ENCODE measurements at regions of chr10 and their contacts with region 1.

Region 1: DNA sequence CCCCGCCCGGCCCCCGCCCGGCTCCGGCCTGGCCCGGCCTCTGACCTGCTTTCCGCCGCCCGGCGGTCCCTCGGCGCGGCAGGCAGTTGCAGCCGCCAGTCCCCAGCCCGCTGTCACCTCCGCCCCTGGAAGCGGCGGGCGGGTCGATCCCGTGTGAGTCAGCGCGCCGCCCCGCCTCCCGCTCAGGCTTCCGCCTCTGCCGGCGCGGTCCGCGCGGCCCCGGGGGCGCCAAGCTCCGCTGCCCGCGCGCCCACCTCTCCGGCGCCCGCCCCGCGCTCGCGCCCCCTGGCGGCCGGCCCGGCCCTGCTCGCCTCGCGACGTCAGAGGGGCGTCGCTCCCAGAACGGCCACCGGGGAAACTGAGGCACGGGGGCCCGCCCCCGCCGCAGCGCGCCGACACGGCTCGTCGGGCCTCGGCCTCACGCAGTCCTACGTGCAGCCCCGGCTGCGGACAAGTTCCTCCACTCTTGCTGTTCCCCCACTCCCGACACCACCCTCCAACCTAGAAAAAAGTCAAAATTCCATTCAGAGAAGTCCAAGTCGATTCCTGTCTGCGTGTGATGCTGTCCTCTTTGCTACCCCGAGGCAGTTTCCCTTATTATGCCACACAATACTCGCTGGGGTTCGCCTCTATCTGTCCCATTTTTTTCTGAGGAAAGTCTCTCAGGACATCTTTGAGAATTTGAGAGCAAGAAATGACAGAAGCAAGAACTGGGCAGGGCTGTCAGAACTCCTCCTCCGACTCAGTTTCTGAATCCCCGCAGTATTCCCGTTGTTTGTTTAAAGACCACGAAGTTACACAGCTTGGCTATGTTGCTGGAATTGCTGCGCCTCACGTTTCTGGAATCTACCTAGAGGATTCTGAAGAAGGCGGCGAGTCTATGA is at the start of gene DNMBP:
- DNase-seq: peak; percentile 65 to 93 (median 83)
- ATAC-seq: peak; percentile 95
- H3K4me3 ChIP-seq: peak within 1 kb of the TSS; percentile 68 to 76
- H3K4me3 Mint-ChIP-seq: peak within 1 kb of the TSS; percentile 91
- H3K27ac ChIP-seq: peak within 1 kb of the TSS; percentile 36 to 40
- H3K27ac Mint-ChIP-seq: peak within 1 kb of the TSS; percentile 86
- H3K4me1 ChIP-seq: peaks cover 17% of the 10 kb centered on the region
- H3K4me1 Mint-ChIP-seq: peaks cover 44% of the 10 kb centered on the region
- H3K27me3 ChIP-seq: no peaks in the 10 kb centered on the region
- H3K27me3 Mint-ChIP-seq: no peaks in the 10 kb centered on the region
- CTCF ChIP-seq: peak; percentile 47
- total RNA-seq, gene DNMBP: 4.0 to 4.1 TPM

Region 2: GRCh38 chr10:99430451-99431189 is 579.4 kb before region 1 on chr10 and contains the start of gene GOT1:
- CTCF ChIA-PET with region 1: no interaction called
- POLR2A ChIA-PET with region 1: interaction called, 3 read pairs
- intact Hi-C with region 1: loop called in 1 of 2 experiments (anchors 2 kb)
- DNase-seq: peak; percentile 83 to 98 (median 89)
- ATAC-seq: peak; percentile 92
- H3K4me3 ChIP-seq: peak within 1 kb of the TSS; percentile 81 to 96
- H3K4me3 Mint-ChIP-seq: peak within 1 kb of the TSS; percentile 98
- H3K27ac ChIP-seq: peak within 1 kb of the TSS; percentile 66 to 81
- H3K27ac Mint-ChIP-seq: peak within 1 kb of the TSS; percentile 96
- H3K4me1 ChIP-seq: peaks cover 21% of the 10 kb centered on the region
- H3K4me1 Mint-ChIP-seq: peaks cover 40% of the 10 kb centered on the region
- H3K27me3 ChIP-seq: no peaks in the 10 kb centered on the region
- H3K27me3 Mint-ChIP-seq: no peaks in the 10 kb centered on the region
- CTCF ChIP-seq: no peak
- total RNA-seq, gene GOT1: 7.2 to 8.6 TPM

Region 3: GRCh38 chr10:99976886-99977665 is 33.0 kb before region 1 on chr10:
- CTCF ChIA-PET with region 1: interaction called, 7 read pairs
- POLR2A ChIA-PET with region 1: no interaction called
- intact Hi-C with region 1: loop called in 1 of 2 experiments (anchors 1 kb)
- DNase-seq: no peak
- ATAC-seq: no peak
- H3K4me3 ChIP-seq: no peak overlapping the region
- H3K4me3 Mint-ChIP-seq: no peak overlapping the region
- H3K27ac ChIP-seq: no peak overlapping the region
- H3K27ac Mint-ChIP-seq: no peak overlapping the region
- H3K4me1 ChIP-seq: no peaks in the 10 kb centered on the region
- H3K4me1 Mint-ChIP-seq: no peaks in the 10 kb centered on the region
- H3K27me3 ChIP-seq: no peaks in the 10 kb centered on the region
- H3K27me3 Mint-ChIP-seq: no peaks in the 10 kb centered on the region
- CTCF ChIP-seq: no peak

Region 4: DNA sequence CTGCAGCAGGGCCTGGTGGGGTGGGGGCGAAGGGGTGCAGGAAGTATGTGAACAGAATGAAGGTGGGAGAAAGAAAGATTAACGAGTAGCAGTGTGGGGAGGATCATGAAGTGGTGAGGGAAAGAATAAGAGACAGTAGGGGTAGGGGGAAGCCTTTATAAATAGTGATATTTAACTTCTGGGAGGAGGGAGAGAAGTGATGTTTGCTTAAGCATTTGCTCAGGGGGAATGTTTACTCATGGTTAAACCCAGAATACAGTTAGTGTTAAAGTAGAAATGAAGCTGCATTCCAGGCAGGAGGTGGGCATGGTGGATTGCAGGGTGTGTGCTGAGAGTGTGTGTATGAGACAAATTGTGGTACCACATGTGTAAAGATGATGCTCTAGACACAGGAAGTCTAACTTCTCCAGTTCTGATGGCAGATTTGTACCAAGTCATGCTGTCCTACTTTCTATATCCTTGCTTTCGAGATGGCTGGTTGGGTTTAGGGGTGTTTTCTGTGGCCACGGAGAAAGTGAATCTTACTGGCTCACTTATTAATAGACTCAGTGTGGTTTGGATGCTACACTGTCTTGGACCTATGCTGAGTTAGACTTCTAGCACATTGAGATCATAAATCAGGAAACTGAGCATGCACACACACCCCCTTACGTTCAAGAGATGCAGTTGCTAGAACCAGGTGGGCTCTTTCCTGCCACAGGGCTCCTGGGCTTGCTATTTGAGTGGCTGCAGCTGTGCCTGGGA is 10.3 kb after region 1 on chr10:
- CTCF ChIA-PET with region 1: interaction called, 13 read pairs
- POLR2A ChIA-PET with region 1: interaction called, 3 read pairs
- intact Hi-C with region 1: no loop called
- DNase-seq: peak in 2 of 9 experiments; percentile 10 to 33
- ATAC-seq: peak; percentile 62
- H3K4me3 ChIP-seq: no peak overlapping the region
- H3K4me3 Mint-ChIP-seq: no peak overlapping the region
- H3K27ac ChIP-seq: no peak overlapping the region
- H3K27ac Mint-ChIP-seq: peak overlapping the region; percentile 20
- H3K4me1 ChIP-seq: no peaks in the 10 kb centered on the region
- H3K4me1 Mint-ChIP-seq: peaks cover 5% of the 10 kb centered on the region
- H3K27me3 ChIP-seq: no peaks in the 10 kb centered on the region
- H3K27me3 Mint-ChIP-seq: peaks cover 3% of the 10 kb centered on the region
- CTCF ChIP-seq: no peak

Region 5: GRCh38 chr10:100148353-100149211 is 138.5 kb after region 1 on chr10:
- CTCF ChIA-PET with region 1: no interaction called
- POLR2A ChIA-PET with region 1: no interaction called
- intact Hi-C with region 1: no loop called
- DNase-seq: no peak
- ATAC-seq: no peak
- H3K4me3 ChIP-seq: no peak overlapping the region
- H3K4me3 Mint-ChIP-seq: no peak overlapping the region
- H3K27ac ChIP-seq: no peak overlapping the region
- H3K27ac Mint-ChIP-seq: no peak overlapping the region
- H3K4me1 ChIP-seq: no peaks in the 10 kb centered on the region
- H3K4me1 Mint-ChIP-seq: no peaks in the 10 kb centered on the region
- H3K27me3 ChIP-seq: no peaks in the 10 kb centered on the region
- H3K27me3 Mint-ChIP-seq: peaks cover 10% of the 10 kb centered on the region
- CTCF ChIP-seq: no peak

Region 6: DNA sequence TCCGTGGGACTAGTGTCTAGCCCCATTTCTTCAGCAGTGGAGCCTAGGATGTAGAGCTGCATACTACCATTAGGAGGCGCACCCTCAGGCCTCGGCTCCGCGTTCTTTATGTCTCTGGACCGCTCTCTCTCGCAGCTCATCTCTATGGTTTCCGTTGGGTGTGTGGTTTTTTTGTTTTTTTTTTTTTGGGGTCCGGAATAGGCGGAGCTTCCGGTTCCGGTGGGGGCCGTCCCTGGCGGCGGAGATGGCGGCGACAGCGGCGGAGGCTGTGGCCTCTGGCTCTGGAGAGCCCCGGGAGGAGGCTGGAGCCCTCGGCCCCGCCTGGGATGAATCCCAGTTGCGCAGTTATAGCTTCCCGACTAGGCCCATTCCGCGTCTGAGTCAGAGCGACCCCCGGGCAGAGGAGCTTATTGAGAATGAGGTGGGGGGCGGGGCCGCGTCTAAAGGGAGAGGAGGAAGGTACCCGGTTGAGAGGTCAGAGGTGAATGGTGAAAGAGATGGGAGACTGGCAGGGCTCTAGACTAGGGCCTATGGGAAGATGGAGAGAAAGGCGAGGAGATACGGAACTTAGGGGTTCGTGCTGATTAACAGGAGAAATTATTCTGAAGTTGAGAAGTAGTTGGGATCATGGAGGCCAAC is 525.8 kb after region 1 on chr10 and contains the start of gene HIF1AN:
- CTCF ChIA-PET with region 1: no interaction called
- POLR2A ChIA-PET with region 1: no interaction called
- intact Hi-C with region 1: loop called in 1 of 2 experiments (anchors 5 kb)
- DNase-seq: peak; percentile 73 to 97 (median 88)
- ATAC-seq: peak; percentile 99
- H3K4me3 ChIP-seq: peak within 1 kb of the TSS; percentile 59 to 82
- H3K4me3 Mint-ChIP-seq: no peak within 1 kb of the TSS
- H3K27ac ChIP-seq: peak within 1 kb of the TSS; percentile 55 to 75
- H3K27ac Mint-ChIP-seq: no peak within 1 kb of the TSS
- H3K4me1 ChIP-seq: peaks cover 29% of the 10 kb centered on the region
- H3K4me1 Mint-ChIP-seq: peaks cover 19% of the 10 kb centered on the region
- H3K27me3 ChIP-seq: no peaks in the 10 kb centered on the region
- H3K27me3 Mint-ChIP-seq: no peaks in the 10 kb centered on the region
- CTCF ChIP-seq: peak; percentile 92
- total RNA-seq, gene HIF1AN: 28.0 to 31.2 TPM

Region 7: GRCh38 chr10:101848894-101849351 is 1838.9 kb after region 1 on chr10:
- CTCF ChIA-PET with region 1: no interaction called
- POLR2A ChIA-PET with region 1: no interaction called
- intact Hi-C with region 1: no loop called
- DNase-seq: no peak
- ATAC-seq: no peak
- H3K4me3 ChIP-seq: no peak overlapping the region
- H3K4me3 Mint-ChIP-seq: no peak overlapping the region
- H3K27ac ChIP-seq: no peak overlapping the region
- H3K27ac Mint-ChIP-seq: no peak overlapping the region
- H3K4me1 ChIP-seq: peaks cover 8% of the 10 kb centered on the region
- H3K4me1 Mint-ChIP-seq: peaks cover 6% of the 10 kb centered on the region
- H3K27me3 ChIP-seq: no peaks in the 10 kb centered on the region
- H3K27me3 Mint-ChIP-seq: peaks cover 3% of the 10 kb centered on the region
- CTCF ChIP-seq: no peak

Measured in CD8-positive, alpha-beta T cell (primary cell).